Right ventricle myocardium superior (tissue), 1 donor: ENCODE measurements at regions of chr17 and their contacts with region 1.

Region 1: GRCh38 chr17:66906321-66907278 is 57.9 kb upstream of the CACNG4 start:
- DNase-seq: peak; percentile 86
- ATAC-seq: peak; percentile 67

Region 2: DNA sequence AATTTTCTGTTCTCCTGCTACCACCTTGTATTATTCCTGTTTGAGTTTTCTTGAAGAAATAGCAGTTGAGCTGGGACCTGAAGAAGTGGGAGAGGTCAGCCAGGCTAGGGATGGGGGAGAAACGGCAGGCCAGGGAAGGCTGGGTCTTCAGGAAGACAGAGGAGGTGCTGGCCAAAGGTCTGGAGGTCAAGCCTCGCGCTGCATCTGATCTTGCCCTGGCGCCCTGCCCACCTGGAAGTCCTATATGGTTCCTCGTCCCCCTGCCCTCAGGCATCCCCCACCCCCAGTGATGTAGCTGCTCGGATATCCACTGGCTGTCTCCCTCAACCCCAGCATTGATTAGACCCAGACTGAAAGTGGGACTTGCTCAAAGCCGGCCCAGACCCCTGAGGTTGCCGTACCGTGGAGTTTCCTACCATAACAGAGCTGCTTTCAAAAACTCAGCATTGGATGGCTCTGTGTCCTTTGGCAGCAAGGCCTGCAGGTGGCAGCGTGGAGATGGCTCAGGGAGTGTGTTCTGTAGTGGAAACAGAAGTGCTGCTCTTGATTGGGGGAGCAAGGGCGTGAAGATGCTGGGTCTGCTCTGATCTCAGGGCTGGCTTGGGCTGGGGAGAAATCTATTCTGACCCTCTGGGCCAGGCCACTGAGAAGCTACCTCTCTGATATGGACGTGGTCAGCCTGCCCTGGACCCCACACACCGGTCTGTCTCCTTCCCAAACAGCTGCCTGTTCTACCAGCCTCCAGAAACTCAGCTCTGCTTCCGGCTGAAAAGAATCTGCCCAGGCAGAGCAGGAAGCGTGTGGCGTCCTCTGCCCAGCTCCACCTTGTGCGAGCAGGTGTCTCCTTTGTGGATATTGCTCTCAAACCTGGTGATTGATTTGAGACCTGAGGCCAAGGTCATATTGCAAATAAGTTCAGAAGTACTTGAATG is 178.7 kb before region 1 on chr17:
- intact Hi-C with region 1: loop called (anchors 2 kb)
- DNase-seq: peak; percentile 65
- ATAC-seq: peak; percentile 78